ENCODE measurements at regions of chr7 and their contacts with region 1.

Region 1: GRCh38 chr7:8442814-8443313 is 9.5 kb downstream of the NXPH1 start:
- DNase-seq: peak in 5 of 10 donors; percentile 39 to 73 (median 51)
- H3K4me3 ChIP-seq: peak overlapping the region in 55 of 59 donors; percentile 9 to 65 (median 42)
- H3K27ac ChIP-seq: peak overlapping the region in 16 of 59 donors; percentile 2 to 53 (median 26)
- H3K27me3 ChIP-seq: peaks cover 11 to 92% (median 66%) of the 10 kb centered on the region in 45 donors
- CTCF ChIP-seq: peak in 5 of 56 donors; percentile 8 to 33 (median 13)

Region 2: GRCh38 chr7:8702807-8703206 is 259.9 kb after region 1 on chr7:
- intact Hi-C with region 1: loop called in 1 of 2 experiments (anchors 10 kb)
- DNase-seq: no peak
- H3K4me3 ChIP-seq: no peak overlapping the region
- H3K27ac ChIP-seq: no peak overlapping the region
- H3K27me3 ChIP-seq: peaks cover 0 to 5% (median 0%) of the 10 kb centered on the region in 45 donors
- CTCF ChIP-seq: no peak

Measured in dorsolateral prefrontal cortex (tissue), 120 donors.